T-cell (primary cell): ENCODE measurements at regions of chr19 and their contacts with region 1.

Region 1: GRCh38 chr19:10454267-10454666 is 33.9 kb downstream of the PDE4A start:
- DNase-seq: no peak
- ATAC-seq: no peak
- H3K4me3 ChIP-seq: no peak overlapping the region
- H3K4me3 Mint-ChIP-seq: no peak overlapping the region
- H3K27ac ChIP-seq: no peak overlapping the region
- H3K27ac Mint-ChIP-seq: no peak overlapping the region
- H3K4me1 ChIP-seq: no peaks in the 10 kb centered on the region
- H3K4me1 Mint-ChIP-seq: peaks cover 0 to 8% (median 0%) of the 10 kb centered on the region in 3 donors
- H3K27me3 ChIP-seq: peaks cover 0 to 21% of the 10 kb centered on the region in 2 experiments
- H3K27me3 Mint-ChIP-seq: peaks cover 3 to 15% of the 10 kb centered on the region in 2 donors

Region 2: DNA sequence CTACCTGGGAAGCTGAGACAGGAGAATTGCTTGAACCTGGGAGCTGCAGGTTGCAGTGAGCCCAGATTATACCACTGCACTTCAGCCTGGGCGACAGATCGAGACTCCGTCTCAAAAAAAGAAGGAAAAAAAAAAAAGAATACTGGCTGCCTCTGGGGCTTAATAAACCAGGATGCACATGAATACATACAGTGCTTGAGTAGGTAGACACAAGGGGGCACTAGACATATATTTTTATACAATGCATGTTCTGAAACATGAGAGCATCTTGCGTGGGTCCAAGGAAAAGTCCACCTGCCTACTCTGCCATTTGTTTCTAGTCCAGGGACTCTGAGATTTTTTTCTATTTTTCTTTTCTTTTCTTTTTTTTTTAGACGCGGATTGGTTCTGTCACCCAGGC is 17.6 kb after region 1 on chr19:
- CTCF ChIA-PET with region 1: interaction called in 1 of 2 experiments, 3 read pairs
- POLR2A ChIA-PET with region 1: interaction called in 1 of 2 experiments, 10 read pairs
- DNase-seq: peak in 1 of 35 experiments; percentile 59
- ATAC-seq: peak in 1 of 4 experiments; percentile 53
- H3K4me3 ChIP-seq: no peak overlapping the region
- H3K4me3 Mint-ChIP-seq: no peak overlapping the region
- H3K27ac ChIP-seq: no peak overlapping the region
- H3K27ac Mint-ChIP-seq: no peak overlapping the region
- H3K4me1 ChIP-seq: no peaks in the 10 kb centered on the region
- H3K4me1 Mint-ChIP-seq: no peaks in the 10 kb centered on the region
- H3K27me3 ChIP-seq: peaks cover 0 to 7% of the 10 kb centered on the region in 2 experiments
- H3K27me3 Mint-ChIP-seq: no peaks in the 10 kb centered on the region